ENCODE measurements at regions of chr2 and their contacts with region 1.

Region 1: DNA sequence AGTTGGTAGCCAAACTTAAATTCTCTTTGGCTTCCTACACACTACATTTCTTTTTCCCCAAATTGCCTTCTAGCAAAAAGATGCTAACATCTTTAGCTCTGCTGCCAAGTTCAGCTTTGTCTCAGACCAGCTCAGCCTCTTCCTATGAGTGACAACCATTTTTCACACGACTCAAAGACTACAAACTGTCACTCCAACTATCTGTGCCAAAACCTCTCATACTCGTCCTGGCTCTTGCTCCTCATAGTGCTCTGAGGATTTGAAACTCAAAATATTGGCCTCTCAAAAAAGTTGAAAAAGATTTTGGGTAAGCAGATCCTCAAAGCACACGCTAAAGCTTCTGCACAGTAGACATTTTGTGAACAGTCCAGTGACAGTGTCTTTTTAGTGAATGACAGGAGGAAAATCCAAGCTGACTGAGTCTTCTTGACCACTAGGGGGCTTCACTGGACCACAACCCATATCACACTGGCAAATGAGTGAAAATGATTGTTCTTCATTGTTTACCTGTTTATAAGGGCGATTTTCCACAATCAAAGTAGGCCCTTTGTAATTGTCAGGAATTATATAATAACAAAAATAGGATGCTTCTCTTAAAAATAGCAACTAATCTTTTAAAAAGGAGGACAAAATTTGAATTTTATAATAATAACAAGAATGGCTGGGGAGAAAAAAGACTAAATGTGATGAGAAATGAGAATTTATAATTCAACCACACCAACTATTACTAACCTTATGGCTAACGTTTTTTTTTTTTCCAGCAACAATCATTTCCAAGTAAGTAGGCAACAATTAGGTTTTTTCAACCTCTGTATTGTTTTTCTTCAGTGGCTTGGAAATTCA is 85.5 kb upstream of the PGAP1 start:
- DNase-seq: peak in 1 of 2 donors; percentile 32
- ATAC-seq: peak in 7 of 8 donors; percentile 76 to 82 (median 76)
- H3K4me3 ChIP-seq: no peak overlapping the region
- H3K27ac ChIP-seq: peak overlapping the region in 2 of 10 donors; percentile 10 to 49
- H3K4me1 ChIP-seq: peaks cover 0 to 7% (median 0%) of the 10 kb centered on the region in 9 donors
- H3K27me3 ChIP-seq: no peaks in the 10 kb centered on the region
- CTCF ChIP-seq: peak; percentile 65 to 90 (median 83)

Region 2: DNA sequence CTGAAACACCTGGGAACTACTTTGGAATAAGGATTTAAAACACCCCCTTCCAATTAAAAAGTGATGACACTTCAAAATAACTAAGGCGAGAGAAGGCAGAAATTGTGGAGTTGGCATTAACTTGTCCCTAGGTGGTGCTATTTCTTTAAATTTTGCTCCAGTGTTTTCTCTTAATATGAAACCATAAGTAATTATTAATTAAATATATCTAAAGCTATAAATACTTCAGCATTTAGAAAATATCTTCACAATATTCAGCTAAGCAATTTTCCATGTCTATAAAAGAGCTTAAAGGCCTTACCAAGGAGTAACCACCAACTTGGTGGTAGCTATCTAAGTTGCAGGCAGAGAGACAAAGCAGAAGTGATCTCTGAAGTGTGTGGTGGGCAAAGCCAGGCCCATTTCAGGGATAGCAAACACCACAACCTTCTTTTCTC is 101.3 kb after region 1 on chr2:
- intact Hi-C with region 1: loop called in 4 of 10 experiments (anchors 2 to 10 kb)
- DNase-seq: no peak
- ATAC-seq: peak in 2 of 8 donors; percentile 43 to 58
- H3K4me3 ChIP-seq: no peak overlapping the region
- H3K27ac ChIP-seq: no peak overlapping the region
- H3K4me1 ChIP-seq: peaks cover 6 to 21% (median 13%) of the 10 kb centered on the region in 9 donors
- H3K27me3 ChIP-seq: no peaks in the 10 kb centered on the region
- CTCF ChIP-seq: peak; percentile 41 to 86 (median 72)

Region 3: DNA sequence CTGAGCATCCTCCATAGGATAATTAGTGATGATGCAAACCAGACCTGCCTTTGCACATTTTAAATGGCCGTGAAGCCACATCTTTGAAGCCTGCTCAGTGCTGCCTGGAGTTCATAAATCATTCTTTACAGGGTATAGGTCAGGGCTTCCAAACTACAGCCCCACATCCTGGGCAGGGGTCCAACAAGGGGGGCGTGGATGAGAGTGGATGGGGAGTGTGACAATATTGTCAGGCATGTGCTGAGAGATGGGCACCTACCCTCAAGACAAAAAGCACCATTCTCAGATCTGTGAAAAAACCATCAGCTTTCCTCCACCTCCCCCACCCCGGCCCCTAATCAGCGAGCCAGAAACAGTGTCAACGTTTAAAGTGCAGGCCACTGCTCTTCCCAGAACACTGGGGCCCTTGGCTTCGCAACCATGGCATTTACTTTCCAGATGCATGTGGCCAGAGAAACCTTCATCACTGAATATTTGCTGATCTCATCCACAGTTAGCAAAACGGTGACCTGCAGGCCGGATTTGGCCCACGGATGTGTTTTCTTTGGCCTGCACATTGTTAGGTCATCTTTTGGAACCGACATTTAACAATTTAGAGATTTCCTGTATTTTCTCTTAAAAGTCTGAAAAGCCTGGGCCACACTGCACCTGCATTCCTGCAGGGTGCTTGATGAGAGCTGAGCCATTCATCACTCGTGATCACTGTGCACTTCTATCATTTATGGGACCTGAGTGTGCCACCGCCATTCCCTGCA is 167.9 kb after region 1 on chr2:
- intact Hi-C with region 1: loop called in 2 of 10 experiments (anchors 10 kb)
- DNase-seq: peak; percentile 34 to 51
- ATAC-seq: peak in 7 of 8 donors; percentile 38 to 77 (median 61)
- H3K4me3 ChIP-seq: no peak overlapping the region
- H3K27ac ChIP-seq: peak overlapping the region in 6 of 10 donors; percentile 29 to 53 (median 38)
- H3K4me1 ChIP-seq: peaks cover 0 to 26% (median 19%) of the 10 kb centered on the region in 9 donors
- H3K27me3 ChIP-seq: no peaks in the 10 kb centered on the region
- CTCF ChIP-seq: no peak

Region 4: GRCh38 chr2:197310271-197310985 is 298.4 kb after region 1 on chr2 and contains the start of gene ANKRD44:
- intact Hi-C with region 1: loop called in 4 of 10 experiments (anchors 1 to 10 kb)
- DNase-seq: peak; percentile 90 to 93
- ATAC-seq: peak; percentile 97 to 98 (median 98)
- H3K4me3 ChIP-seq: peak within 1 kb of the TSS; percentile 27 to 84 (median 74)
- H3K27ac ChIP-seq: peak within 1 kb of the TSS; percentile 44 to 92 (median 68)
- H3K4me1 ChIP-seq: peaks cover 0 to 50% (median 22%) of the 10 kb centered on the region in 9 donors
- H3K27me3 ChIP-seq: no peaks in the 10 kb centered on the region
- CTCF ChIP-seq: peak in 8 of 9 donors; percentile 16 to 60 (median 42)
- total RNA-seq, gene ANKRD44: 4.2 to 20.1 (median 7.3) TPM